ENCODE measurements at regions of chr4 and their contacts with region 1.

Region 1: GRCh38 chr4:175127314-175127713 is 209.2 kb downstream of the ADAM29 start:
- DNase-seq: no peak
- H3K4me3 ChIP-seq: no peak overlapping the region
- H3K27ac ChIP-seq: peak overlapping the region in 1 of 2 donors; percentile 75
- H3K4me1 ChIP-seq: no peaks in the 10 kb centered on the region
- H3K27me3 ChIP-seq: no peaks in the 10 kb centered on the region
- CTCF ChIP-seq: no peak
- POLR2A ChIP-seq: no peak

Region 2: GRCh38 chr4:174928174-174928573 is 199.1 kb before region 1 on chr4:
- intact Hi-C with region 1: loop called (anchors 5 kb)
- DNase-seq: no peak
- H3K4me3 ChIP-seq: no peak overlapping the region
- H3K27ac ChIP-seq: no peak overlapping the region
- H3K4me1 ChIP-seq: no peaks in the 10 kb centered on the region
- H3K27me3 ChIP-seq: no peaks in the 10 kb centered on the region
- CTCF ChIP-seq: no peak
- POLR2A ChIP-seq: no peak

Region 3: DNA sequence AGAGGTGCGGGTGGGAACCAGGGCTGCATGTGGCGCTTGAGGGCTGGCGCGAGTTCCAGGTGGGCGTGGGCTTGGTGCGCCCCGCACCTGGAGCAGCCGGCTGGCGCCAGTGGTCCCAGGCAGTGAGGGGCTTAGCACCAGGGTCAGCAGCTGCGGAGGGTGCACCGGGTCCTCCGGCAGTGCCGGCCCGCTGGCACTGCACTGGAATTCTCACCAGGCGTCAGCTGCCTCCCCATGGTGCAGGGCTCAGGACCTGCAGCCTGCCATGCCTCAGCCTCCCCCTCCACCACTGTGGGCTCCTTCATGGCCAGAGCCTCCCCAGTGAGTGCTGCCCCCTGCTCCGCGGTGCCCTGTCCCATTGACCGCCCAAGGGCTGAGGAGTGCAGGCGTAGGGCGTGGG is 35.2 kb before region 1 on chr4:
- intact Hi-C with region 1: loop called (anchors 2 kb)
- DNase-seq: no peak
- H3K4me3 ChIP-seq: no peak overlapping the region
- H3K27ac ChIP-seq: no peak overlapping the region
- H3K4me1 ChIP-seq: no peaks in the 10 kb centered on the region
- H3K27me3 ChIP-seq: no peaks in the 10 kb centered on the region
- CTCF ChIP-seq: no peak
- POLR2A ChIP-seq: no peak

Region 4: GRCh38 chr4:176034499-176034898 is 907.2 kb after region 1 on chr4:
- intact Hi-C with region 1: no loop called
- DNase-seq: no peak
- H3K4me3 ChIP-seq: no peak overlapping the region
- H3K27ac ChIP-seq: no peak overlapping the region
- H3K4me1 ChIP-seq: no peaks in the 10 kb centered on the region
- H3K27me3 ChIP-seq: no peaks in the 10 kb centered on the region
- CTCF ChIP-seq: peak in 1 of 3 donors; percentile 40
- POLR2A ChIP-seq: no peak